ENCODE measurements at regions of chr4 and their contacts with region 1.

Region 1: DNA sequence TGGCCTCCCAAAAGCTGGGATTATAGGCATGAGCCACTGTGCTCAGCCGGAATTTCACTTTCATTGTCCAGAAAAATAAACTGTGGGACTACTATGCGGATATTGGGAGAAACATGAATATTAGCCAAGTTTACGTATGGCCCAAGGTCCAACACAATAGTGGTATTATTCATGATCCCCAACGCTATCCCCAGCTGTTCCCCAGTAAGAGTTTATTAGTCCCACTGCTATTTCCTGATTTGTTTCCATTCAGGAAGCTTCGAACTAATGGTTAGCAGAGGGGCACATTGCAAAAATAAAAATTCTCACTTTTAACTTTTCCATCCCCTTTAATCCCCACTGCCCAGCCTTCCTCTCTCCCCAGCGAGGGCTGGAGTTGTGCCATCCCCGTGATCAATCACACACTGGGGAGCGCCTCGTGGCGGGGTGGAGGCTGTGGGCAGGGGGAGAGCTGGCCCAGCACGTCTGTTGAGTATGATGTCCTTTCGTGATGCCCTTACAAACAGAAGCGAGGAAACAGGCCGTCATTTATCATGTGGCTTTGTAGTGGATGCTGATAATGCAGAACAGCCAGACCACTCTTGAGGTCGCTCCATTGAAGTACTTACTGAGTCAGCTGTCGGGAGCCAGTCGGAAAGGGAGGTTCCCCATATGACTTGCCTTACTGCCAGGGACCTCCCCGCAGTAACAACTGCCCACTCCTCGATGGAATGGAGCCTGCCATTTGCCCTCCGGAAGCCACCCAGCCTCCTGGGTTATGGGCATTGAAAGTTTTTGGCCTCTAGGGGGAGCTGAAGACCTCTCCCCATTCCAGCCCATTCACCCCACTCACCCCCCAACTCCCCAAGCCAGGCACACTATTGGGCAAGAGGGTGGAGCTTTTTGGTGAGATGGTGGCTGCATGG is 117.0 kb downstream of the KDR start:
- DNase-seq: peak; percentile 24
- H3K4me3 ChIP-seq: no peak overlapping the region
- H3K27ac ChIP-seq: no peak overlapping the region
- H3K4me1 ChIP-seq: no peaks in the 10 kb centered on the region
- H3K27me3 ChIP-seq: peaks cover 10% of the 10 kb centered on the region; the same call in 1 of the 2 replicates

Region 2: DNA sequence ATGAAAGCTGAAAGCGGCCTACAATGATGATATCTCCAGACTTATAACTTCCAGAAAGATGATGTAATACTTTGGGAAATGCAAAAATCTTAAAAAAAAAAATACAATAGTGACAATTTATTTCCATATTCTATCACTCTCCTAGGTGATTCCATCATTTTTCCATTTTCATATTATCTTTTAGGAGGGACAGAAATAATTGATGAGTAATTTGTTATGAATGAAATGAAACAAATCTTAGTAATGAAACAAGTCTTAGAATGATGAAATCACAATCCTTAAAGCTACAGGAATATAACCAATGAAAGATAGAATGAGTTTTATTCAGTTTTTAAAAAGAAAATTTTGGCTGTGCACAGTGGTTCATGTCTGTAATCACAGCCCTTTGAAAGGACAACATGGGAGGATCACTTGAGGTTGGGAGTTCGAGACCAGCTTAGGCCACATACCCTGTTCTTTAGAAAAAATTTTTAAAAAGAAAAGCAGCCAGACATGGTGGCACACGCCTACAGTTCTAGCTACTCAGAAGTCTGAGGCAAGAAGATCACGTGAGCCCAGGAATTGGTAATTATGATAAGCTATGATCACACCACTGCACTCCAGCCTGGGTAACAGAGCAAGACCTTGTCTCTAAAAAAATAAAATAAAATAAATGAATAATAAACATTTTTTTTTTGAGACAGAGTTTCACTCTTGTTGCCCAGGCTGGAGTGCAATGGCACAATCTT is 516.6 kb after region 1 on chr4:
- in situ Hi-C with region 1: no loop called
- DNase-seq: peak; percentile 62
- H3K4me3 ChIP-seq: peak overlapping the region; percentile 35
- H3K27ac ChIP-seq: peak overlapping the region; percentile 82
- H3K4me1 ChIP-seq: peaks cover 18% of the 10 kb centered on the region
- H3K27me3 ChIP-seq: no peaks in the 10 kb centered on the region

Region 3: DNA sequence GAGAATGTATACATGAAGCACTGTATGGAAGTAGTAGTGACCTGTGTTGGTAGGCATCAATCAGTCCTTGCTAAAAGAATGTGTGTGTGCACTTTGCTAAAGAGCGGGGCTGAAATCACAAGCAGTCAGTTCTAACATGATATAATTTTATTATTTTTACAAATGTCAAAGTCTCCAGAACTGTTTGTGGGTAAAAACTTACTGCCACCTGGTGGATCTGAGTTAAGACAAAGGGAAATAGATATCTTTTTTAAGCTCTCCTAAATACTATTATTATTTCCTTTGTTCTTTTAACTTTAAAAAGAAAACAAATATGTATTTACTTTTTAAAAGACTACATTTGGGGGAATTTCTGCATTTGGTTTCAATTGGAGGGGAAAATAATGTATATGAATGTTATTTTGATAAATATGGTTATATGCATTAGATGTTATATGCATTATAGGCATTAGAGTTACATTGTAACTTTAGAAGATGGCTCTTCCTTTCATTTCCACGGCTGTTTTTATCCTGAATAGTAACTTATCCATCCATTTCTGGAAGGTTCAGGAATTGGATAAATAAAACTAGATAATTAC is 546.1 kb after region 1 on chr4:
- in situ Hi-C with region 1: loop called (anchors 25 kb)
- DNase-seq: peak; percentile 75
- H3K4me3 ChIP-seq: no peak overlapping the region
- H3K27ac ChIP-seq: no peak overlapping the region
- H3K4me1 ChIP-seq: peaks cover 17% of the 10 kb centered on the region
- H3K27me3 ChIP-seq: no peaks in the 10 kb centered on the region